ENCODE measurements at regions of chr17 and their contacts with region 1.

Region 1: DNA sequence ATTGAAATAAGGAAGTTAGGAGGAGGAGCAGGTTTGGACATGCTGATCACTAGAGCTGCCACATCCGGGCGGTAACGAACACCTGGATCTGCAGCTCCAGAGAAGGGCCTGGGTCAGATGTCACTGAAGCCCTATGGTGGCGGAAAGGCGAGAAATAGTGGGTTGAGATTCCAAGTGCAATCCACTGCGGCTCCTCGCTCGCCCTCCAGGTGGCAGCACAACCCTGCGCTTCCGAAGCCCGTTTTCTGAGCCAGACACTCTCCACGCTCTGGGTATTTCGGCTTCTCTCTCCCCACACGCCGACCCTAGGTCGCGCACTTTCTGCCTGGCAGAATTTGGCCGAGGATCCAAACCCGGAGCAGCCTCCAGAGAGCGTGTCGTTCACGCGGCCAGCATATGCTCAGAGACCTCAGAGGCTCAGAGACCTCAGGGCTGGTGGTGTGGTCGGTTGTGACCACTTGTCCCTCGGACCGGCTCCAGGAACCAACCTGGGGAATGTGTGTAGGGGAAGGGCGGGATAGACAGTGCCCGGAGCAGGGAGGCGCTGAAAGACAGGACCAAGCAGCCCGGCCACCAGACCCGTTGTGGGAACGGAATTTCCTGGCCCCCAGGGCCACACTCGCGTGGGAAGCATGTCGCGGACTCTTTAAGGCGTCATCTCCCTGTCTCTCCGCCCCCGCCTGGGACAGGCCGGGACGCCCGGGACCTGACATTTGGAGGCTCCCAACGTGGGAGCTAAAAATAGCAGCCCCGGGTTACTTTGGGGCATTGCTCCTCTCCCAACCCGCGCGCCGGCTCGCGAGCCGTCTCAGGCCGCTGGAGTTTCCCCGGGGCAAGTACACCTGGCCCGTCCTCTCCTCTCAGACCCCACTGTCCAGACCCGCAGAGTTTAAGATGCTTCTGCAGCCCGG is 744 bp upstream of the SLC2A4 start:
- DNase-seq: peak; percentile 78
- ATAC-seq: peak; percentile 76
- H3K4me3 ChIP-seq: peak overlapping the region; percentile 71
- H3K27ac ChIP-seq: peak overlapping the region; percentile 50
- H3K4me1 ChIP-seq: peaks cover 10% of the 10 kb centered on the region
- H3K27me3 ChIP-seq: no peaks in the 10 kb centered on the region
- CTCF ChIP-seq: peak; percentile 80

Region 2: DNA sequence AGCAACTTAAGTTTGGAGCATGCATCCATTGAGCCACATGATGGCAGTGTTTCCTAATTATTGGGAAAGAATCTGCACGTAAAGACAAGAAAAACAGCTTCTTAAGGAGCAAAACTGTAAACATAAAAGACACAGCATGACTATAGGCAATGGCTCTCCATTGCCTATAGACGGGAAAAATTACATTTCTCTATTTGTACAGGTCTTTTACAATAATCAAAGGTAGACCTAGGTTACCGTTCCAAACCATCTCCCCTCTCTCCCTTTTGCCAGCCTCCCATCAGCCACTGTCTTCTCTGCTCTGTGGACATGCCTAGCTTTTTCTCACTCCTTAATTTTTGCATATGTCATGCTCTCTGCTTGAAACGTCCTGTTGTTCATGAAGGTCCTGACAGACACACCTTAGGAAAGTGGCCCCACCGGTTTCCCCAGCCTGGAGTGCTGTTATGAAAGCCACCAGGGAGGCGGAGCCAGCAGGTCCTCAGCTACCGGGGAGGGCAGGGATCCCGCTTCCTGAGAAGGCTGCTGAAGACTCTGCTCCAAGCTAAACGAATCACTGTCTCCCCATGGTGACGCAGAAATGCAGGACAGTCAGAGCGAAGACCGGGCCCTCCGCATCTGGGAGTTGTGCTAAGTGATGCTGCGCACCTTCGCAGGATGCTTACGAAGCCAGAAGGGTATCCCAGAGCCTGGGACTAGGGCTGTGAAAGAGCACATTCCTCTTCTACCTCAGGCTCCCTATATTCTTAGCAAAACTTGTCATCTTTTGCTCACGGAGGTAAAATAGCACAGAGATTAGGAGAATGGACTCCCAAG is 234.7 kb before region 1 on chr17:
- CTCF ChIA-PET with region 1: no interaction called
- POLR2A ChIA-PET with region 1: no interaction called
- intact Hi-C with region 1: no loop called
- DNase-seq: peak; percentile 86
- ATAC-seq: peak; percentile 53
- H3K4me3 ChIP-seq: peak overlapping the region; percentile 64
- H3K27ac ChIP-seq: peak overlapping the region; percentile 94
- H3K4me1 ChIP-seq: peaks cover 33% of the 10 kb centered on the region
- H3K27me3 ChIP-seq: no peaks in the 10 kb centered on the region
- CTCF ChIP-seq: peak; percentile 87

Region 3: DNA sequence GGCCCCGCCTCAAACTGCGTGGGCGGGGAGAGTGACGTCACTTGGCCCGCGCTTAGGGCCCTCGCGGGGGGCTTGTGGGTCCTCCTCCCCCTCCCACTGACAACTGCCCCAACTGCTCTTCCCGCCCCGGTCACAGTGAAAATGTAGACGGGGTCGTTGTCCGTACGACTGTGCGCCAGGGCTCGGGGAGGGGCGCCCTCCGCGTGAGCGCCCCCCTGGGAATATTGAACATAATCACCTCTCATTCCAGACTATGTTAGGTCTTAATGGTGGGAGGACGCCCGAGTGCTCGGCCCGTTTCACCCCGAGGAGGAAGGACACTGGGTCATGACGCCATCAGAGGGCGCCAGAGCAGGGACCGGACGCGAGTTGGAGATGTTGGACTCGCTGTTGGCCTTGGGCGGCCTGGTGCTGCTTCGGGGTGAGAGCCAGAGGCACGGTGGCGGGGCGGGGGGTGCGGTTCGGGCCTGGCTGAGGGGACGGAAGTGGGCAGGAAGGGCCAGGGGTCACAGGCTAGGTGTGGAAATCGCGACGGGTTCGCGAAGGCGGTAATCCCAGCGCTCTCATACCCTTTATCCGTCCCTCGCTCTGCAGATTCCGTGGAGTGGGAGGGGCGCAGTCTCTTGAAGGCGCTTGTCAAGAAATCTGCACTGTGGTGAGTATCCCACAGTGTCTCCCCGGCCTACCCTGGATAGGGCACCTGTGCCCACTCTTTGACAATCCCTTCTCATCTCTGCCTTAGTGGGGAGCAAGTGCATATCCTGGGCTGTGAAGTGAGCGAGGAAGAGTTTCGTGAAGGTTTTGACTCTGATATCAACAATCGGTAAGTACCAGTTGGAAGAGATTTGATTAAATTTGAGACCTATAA is 28.4 kb before region 1 on chr17 and contains the start of gene ELP5:
- CTCF ChIA-PET with region 1: interaction called, 8 read pairs
- POLR2A ChIA-PET with region 1: no interaction called
- intact Hi-C with region 1: loop called (anchors 2 kb)
- DNase-seq: peak; percentile 86
- ATAC-seq: peak; percentile 67
- H3K4me3 ChIP-seq: peak within 1 kb of the TSS; percentile 92
- H3K27ac ChIP-seq: peak within 1 kb of the TSS; percentile 96
- H3K4me1 ChIP-seq: peaks cover 21% of the 10 kb centered on the region
- H3K27me3 ChIP-seq: no peaks in the 10 kb centered on the region
- CTCF ChIP-seq: peak; percentile 43; the same call in 1 of the 2 replicates
- total RNA-seq, gene ELP5: 60.5 and 67.5 TPM in 2 replicates

Region 4: DNA sequence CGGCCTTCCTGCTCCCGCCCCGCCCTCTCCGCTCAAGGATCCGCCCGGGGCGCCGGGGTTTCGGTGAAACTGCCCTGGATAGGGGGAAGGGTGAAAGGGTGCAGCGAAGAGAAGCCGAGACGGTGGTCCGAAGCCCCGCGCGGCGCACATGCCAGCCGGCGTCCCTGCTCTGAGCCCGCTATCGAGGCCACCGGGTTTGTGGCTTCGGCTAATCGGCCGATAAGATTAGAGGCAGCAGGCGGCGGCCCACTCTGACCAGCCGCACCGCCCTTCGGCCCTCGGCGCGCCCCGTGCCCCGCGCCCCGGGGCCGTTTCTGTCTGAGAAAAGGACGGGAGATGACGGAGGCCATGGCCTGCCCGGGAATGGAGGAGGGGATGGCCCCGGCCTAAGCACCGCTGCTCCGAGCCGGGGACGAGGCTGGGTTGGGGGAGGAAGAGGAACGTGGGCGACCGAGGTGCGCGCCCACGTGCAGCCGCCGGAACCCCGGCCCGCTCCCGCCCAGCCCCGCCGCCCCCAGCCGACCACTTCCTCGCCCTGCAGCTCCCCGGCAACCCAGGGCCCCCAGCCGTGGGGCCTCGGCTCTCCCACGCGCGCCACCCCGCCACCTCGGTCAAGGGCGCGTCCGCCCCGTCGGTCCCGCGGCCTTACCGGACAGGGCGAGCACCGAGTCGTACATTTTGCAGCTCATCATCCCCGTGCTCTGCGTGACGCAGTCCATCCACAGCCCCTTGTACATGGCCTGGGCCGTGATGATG is 19.4 kb before region 1 on chr17:
- CTCF ChIA-PET with region 1: no interaction called
- POLR2A ChIA-PET with region 1: interaction called, 5 read pairs
- intact Hi-C with region 1: loop called (anchors 2 kb)
- DNase-seq: peak; percentile 70
- ATAC-seq: peak; percentile 5
- H3K4me3 ChIP-seq: peak overlapping the region; percentile 97
- H3K27ac ChIP-seq: peak overlapping the region; percentile 83
- H3K4me1 ChIP-seq: peaks cover 27% of the 10 kb centered on the region
- H3K27me3 ChIP-seq: no peaks in the 10 kb centered on the region
- CTCF ChIP-seq: no peak

Region 5: GRCh38 chr17:7296189-7296902 is 15.6 kb after region 1 on chr17:
- CTCF ChIA-PET with region 1: interaction called, 14 read pairs
- POLR2A ChIA-PET with region 1: interaction called, 3 read pairs
- intact Hi-C with region 1: loop called (anchors 1 kb)
- DNase-seq: peak; percentile 83
- ATAC-seq: peak; percentile 78
- H3K4me3 ChIP-seq: peak overlapping the region; percentile 46; the same call in 1 of the 2 replicates
- H3K27ac ChIP-seq: no peak overlapping the region
- H3K4me1 ChIP-seq: peaks cover 7% of the 10 kb centered on the region; the same call in 1 of the 2 replicates
- H3K27me3 ChIP-seq: no peaks in the 10 kb centered on the region
- CTCF ChIP-seq: peak; percentile 86

Measured in PC-3 (cell line).